HCT116 (cell line): ENCODE measurements at regions of chr14 and their contacts with region 1.

Region 1: DNA sequence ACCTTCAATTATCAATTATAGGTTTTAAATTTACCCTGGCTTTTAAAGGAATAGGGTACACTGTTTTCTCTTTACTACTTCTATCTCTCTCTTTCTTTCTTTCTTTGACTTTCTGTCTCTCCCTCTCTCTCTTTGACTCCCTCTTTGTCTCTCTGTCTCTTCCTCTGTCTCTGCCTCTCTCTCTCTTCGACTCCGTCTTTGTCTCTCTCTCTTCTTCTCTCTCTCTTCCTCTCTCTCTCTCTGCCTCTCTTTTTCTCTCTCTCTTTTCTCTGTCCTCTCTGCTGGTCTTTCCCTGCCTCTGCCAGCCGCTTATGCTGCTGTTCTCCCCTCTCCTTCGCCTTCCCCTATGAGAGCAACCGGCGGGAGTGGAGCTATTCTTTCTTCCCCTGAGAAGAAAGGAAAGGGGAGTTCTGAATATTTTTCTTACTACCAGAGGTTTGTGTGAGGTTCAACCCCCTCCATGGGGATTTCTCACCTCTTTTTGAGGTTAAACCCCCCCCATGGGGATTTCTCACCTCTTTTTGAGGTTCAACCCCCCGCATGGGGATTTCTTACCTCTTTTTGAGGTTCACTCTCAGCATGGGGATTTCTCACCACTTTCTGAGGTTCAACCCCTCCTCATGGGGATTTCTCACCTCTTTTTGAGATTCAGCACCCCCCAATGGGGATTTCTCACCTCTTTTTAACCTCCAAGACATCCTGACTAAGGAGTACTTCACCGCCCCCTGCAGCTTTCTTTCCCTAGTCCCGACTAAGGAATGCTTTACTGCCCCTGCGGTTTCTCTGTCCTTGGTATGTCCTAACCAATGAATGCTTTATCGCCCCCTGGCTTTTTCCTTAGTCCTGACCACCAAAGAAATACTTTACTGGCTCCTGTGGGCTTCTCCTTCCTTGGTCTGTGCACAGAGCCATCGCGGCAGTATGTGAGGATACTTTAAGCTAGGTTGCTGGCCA is 27.4 kb upstream of the DDHD1 start:
- DNase-seq: peak; percentile 76
- ATAC-seq: peak; percentile 92
- H3K4me3 ChIP-seq: peak overlapping the region in 1 of 2 experiments; percentile 10; a peak in 1 of 4 replicates
- H3K27ac ChIP-seq: no peak overlapping the region
- H3K4me1 ChIP-seq: peaks cover 17 to 36% of the 10 kb centered on the region in 2 experiments
- H3K27me3 ChIP-seq: no peaks in the 10 kb centered on the region
- CTCF ChIP-seq: peak; percentile 47 to 64 (median 59); a peak in 5 of 6 replicates
- POLR2A ChIP-seq: no peak
- RAD21 ChIP-seq: peak; percentile 36; the same call in 1 of the 2 replicates

Region 2: DNA sequence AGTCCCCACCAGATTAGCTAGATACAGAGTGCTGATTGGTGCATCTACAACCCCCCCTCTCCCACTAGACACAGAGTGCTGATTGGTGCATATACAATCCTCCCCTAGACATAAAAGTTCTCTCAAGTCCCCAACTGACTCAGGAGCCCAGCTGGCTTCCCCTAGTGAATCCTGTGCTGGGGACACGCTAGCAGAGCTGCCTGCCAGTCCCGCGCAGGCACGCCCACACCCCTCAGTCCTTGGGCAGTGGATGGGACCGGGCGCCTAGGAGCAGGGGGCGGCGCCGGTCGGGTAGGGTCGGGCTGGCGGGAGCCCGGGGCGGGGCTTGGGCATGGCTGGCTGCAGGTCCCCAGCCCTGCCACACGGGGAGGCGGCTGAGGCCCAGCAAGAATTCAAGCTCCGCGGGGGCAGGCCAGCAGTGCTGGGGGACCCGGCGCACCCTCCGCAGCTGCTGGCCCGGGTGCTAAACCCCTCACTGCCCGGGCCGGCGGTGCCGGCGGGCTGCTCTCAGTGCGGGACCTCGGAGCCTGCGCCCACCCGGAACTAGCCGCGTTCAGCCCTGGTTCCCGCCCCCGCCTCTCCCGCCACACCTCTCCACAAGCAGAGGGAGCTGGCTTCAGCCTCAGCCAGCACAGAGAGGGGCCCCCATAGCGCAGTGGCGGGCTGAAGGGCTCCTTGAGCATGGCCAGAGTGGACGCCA is 36.9 kb after region 1 on chr14:
- CTCF ChIA-PET with region 1: interaction called, 3 read pairs
- POLR2A ChIA-PET with region 1: no interaction called
- RAD21 ChIA-PET with region 1: no interaction called
- intact Hi-C with region 1: loop called (anchors 1 kb)
- DNase-seq: peak; percentile 59
- ATAC-seq: peak; percentile 99
- H3K4me3 ChIP-seq: peak overlapping the region; percentile 52 to 62
- H3K27ac ChIP-seq: peak overlapping the region; percentile 74
- H3K4me1 ChIP-seq: peaks cover 4 to 12% of the 10 kb centered on the region in 2 experiments; a peak in 2 of 4 replicates
- H3K27me3 ChIP-seq: no peaks in the 10 kb centered on the region
- CTCF ChIP-seq: peak in 2 of 3 experiments; percentile 46 to 50; a peak in 4 of 6 replicates
- POLR2A ChIP-seq: peak; percentile 49
- RAD21 ChIP-seq: no peak

Region 3: GRCh38 chr14:53501361-53502211 is 321.0 kb after region 1 on chr14:
- CTCF ChIA-PET with region 1: no interaction called
- POLR2A ChIA-PET with region 1: no interaction called
- RAD21 ChIA-PET with region 1: no interaction called
- intact Hi-C with region 1: no loop called
- DNase-seq: no peak
- ATAC-seq: no peak
- H3K4me3 ChIP-seq: no peak overlapping the region
- H3K27ac ChIP-seq: no peak overlapping the region
- H3K4me1 ChIP-seq: no peaks in the 10 kb centered on the region
- H3K27me3 ChIP-seq: no peaks in the 10 kb centered on the region
- CTCF ChIP-seq: no peak
- POLR2A ChIP-seq: no peak
- RAD21 ChIP-seq: no peak